Heart right ventricle (tissue), 16 donors: ENCODE measurements at regions of chr6 and their contacts with region 1.

Region 1: GRCh38 chr6:30935018-30935417 is 3.0 kb upstream of the SFTA2 start:
- DNase-seq: no peak
- ATAC-seq: no peak
- H3K4me3 ChIP-seq: no peak overlapping the region
- H3K27ac ChIP-seq: no peak overlapping the region
- H3K4me1 ChIP-seq: no peaks in the 10 kb centered on the region
- H3K27me3 ChIP-seq: peaks cover 0 to 11% (median 0%) of the 10 kb centered on the region in 7 donors
- CTCF ChIP-seq: no peak

Region 2: DNA sequence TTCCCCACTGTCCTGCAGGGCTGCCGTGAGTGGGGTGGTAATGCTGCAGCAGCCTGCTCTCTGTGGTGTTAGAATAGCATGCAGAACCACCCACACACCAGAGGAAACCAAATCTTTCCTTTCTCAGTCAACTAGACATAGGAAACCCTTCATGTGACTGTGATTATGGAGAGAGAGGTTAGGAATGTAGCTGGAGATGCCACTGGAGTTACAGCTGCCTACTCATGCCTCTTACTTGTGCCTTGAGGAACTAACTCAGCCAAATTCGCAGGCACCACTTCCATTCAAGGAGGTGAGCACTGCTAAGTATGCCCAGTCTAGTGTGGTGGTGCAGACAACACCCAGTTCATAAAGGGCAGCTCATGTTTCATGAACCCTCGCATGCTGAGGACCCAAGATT is 102.7 kb after region 1 on chr6:
- intact Hi-C with region 1: loop called in 3 of 10 experiments (anchors 5 to 10 kb)
- DNase-seq: no peak
- ATAC-seq: peak in 1 of 8 donors; percentile 12
- H3K4me3 ChIP-seq: no peak overlapping the region
- H3K27ac ChIP-seq: no peak overlapping the region
- H3K4me1 ChIP-seq: peaks cover 0 to 1% (median 0%) of the 10 kb centered on the region in 9 donors
- H3K27me3 ChIP-seq: peaks cover 0 to 12% (median 0%) of the 10 kb centered on the region in 7 donors
- CTCF ChIP-seq: no peak

Region 3: GRCh38 chr6:31049518-31049917 is 114.5 kb after region 1 on chr6:
- intact Hi-C with region 1: loop called in 3 of 10 experiments (anchors 5 to 10 kb)
- DNase-seq: no peak
- ATAC-seq: no peak
- H3K4me3 ChIP-seq: no peak overlapping the region
- H3K27ac ChIP-seq: no peak overlapping the region
- H3K4me1 ChIP-seq: no peaks in the 10 kb centered on the region
- H3K27me3 ChIP-seq: peaks cover 0 to 34% (median 18%) of the 10 kb centered on the region in 7 donors
- CTCF ChIP-seq: no peak

Region 4: DNA sequence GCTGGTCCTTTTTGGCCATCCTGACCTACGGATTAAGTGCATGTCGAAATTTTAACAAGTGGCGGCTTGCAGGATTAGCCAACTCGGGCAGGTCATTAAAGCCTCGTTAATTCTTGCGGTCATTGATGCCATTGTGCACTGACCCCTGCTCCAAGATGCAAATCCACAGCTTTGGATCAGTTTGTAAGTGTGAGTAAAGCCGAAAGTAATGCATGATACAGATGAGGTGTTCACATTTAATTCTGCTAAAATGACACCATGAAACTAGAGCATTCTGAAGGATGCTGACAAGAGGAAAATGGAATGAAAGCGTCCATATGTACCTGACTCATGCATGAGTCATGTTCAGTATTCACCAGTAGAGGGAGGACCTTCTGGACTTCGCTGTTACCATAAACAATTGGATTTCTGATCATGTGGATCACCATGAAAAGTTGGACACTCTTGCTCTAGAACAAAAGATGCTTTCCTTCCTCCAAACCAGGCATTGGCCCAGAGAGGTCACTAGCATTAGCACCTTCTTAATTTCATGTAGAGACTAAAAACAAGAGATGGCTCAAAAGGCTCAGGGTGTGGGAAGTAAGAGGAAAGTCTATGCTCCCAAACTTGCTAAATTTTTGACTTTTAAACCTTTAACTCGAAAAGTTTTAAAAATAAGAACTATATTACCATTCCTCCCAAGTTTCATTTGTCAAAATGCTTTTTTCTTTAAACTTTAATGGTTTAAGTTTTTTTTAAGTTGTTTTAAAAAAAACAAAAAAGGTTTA is 123.3 kb after region 1 on chr6:
- intact Hi-C with region 1: loop called in 1 of 10 experiments (anchors 5 kb)
- DNase-seq: no peak
- ATAC-seq: peak in 1 of 8 donors; percentile 41
- H3K4me3 ChIP-seq: no peak overlapping the region
- H3K27ac ChIP-seq: no peak overlapping the region
- H3K4me1 ChIP-seq: peaks cover 0 to 3% (median 0%) of the 10 kb centered on the region in 9 donors
- H3K27me3 ChIP-seq: peaks cover 0 to 13% (median 3%) of the 10 kb centered on the region in 7 donors
- CTCF ChIP-seq: peak; percentile 24 to 63 (median 46)

Region 5: DNA sequence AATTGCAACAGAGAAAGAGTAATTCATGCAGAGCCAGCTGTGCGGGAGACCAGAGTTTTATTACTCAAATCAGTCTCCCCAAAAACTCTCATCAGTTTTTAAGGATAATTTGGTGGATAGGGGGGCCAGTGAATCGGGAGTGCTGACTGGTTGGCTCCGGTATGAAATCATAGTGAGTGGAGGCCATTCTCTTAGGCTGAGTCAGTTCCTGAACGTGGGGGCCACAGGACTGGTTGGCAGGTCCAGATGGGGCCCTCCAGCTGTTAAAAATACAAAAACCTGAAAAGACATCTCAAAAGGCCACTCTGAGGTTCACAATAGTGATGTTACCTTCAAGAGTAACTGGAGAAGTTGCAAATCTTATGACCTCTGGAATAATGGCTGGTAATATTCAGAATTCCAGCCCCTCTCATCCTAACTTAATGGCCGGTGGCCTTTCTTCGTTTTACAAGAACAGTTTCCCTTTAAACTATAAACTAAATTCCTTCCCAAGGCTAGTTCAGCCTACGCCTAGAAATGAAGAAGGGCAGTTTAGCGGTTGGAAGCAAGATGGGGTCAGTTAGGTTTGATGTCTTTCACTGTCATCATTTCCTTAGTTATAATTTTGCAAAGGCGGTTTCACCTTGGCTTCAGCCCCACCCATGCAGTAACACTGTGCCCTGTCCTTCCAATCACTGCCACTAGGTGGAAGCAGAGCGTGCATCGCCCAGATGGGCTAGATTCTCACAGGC is 461.6 kb after region 1 on chr6:
- intact Hi-C with region 1: no loop called
- DNase-seq: peak; percentile 78 to 86
- ATAC-seq: peak in 4 of 8 donors; percentile 28 to 42 (median 36)
- H3K4me3 ChIP-seq: peak overlapping the region in 1 of 10 donors; percentile 14
- H3K27ac ChIP-seq: no peak overlapping the region
- H3K4me1 ChIP-seq: peaks cover 4 to 46% (median 34%) of the 10 kb centered on the region in 9 donors
- H3K27me3 ChIP-seq: no peaks in the 10 kb centered on the region
- CTCF ChIP-seq: peak; percentile 83 to 98 (median 93)